AG04449 (cell line): ENCODE measurements at regions of chr7 and their contacts with region 1.

Region 1: GRCh38 chr7:134514663-134515062 is 12.7 kb upstream of the AKR1B10 start:
- DNase-seq: peak; percentile 31
- H3K4me3 ChIP-seq: no peak overlapping the region
- CTCF ChIP-seq: peak; percentile 69

Region 2: GRCh38 chr7:134420424-134421125 is 94.1 kb before region 1 on chr7:
- CTCF ChIA-PET with region 1: interaction called, 417 read pairs
- POLR2A ChIA-PET with region 1: no interaction called
- DNase-seq: no peak
- H3K4me3 ChIP-seq: no peak overlapping the region
- CTCF ChIP-seq: peak; percentile 55

Region 3: GRCh38 chr7:134448700-134449229 is 65.9 kb before region 1 on chr7:
- CTCF ChIA-PET with region 1: interaction called, 32 read pairs
- POLR2A ChIA-PET with region 1: no interaction called
- DNase-seq: peak; percentile 60
- H3K4me3 ChIP-seq: no peak overlapping the region
- CTCF ChIP-seq: no peak

Region 4: DNA sequence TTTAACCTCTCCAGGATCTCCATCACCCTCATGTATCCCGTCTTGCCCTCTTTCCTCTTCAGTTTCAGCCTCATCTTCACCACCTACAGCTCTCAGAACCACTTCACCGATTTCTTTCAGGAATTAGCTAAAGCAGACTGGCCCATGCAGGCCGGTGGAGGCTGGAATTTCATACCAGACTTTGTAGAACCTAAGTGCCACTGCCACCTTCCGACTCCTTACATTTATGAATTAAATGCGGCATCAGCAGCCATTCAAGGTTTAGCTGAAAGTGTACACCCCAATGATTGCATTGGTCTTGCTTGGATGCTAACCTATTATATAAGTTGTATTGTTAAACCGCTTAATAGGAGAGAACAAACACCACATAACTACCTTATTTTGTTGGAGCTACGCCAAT is 22.7 kb before region 1 on chr7:
- CTCF ChIA-PET with region 1: interaction called, 17 read pairs
- POLR2A ChIA-PET with region 1: no interaction called
- DNase-seq: no peak
- H3K4me3 ChIP-seq: no peak overlapping the region
- CTCF ChIP-seq: no peak

Region 5: GRCh38 chr7:134533288-134533771 is 18.7 kb after region 1 on chr7:
- CTCF ChIA-PET with region 1: interaction called, 20 read pairs
- POLR2A ChIA-PET with region 1: no interaction called
- DNase-seq: no peak
- H3K4me3 ChIP-seq: no peak overlapping the region
- CTCF ChIP-seq: no peak

Region 6: GRCh38 chr7:134605973-134606923 is 91.6 kb after region 1 on chr7:
- CTCF ChIA-PET with region 1: interaction called, 145 read pairs
- POLR2A ChIA-PET with region 1: no interaction called
- DNase-seq: no peak
- H3K4me3 ChIP-seq: peak overlapping the region; percentile 6; the same call in 1 of the 2 replicates
- CTCF ChIP-seq: peak; percentile 77